Endothelial cell of umbilical vein (primary cell): ENCODE measurements at regions of chr14 and their contacts with region 1.

Region 1: GRCh38 chr14:88013750-88014349 is 8.9 kb downstream of the GPR65 start:
- DNase-seq: peak; percentile 51
- H3K4me3 ChIP-seq: no peak overlapping the region
- H3K27ac ChIP-seq: no peak overlapping the region
- H3K4me1 ChIP-seq: peaks cover 3% of the 10 kb centered on the region
- H3K27me3 ChIP-seq: peaks cover 0 to 1% of the 10 kb centered on the region in 2 experiments
- CTCF ChIP-seq: peak; percentile 76 to 88
- POLR2A ChIP-seq: no peak

Region 2: DNA sequence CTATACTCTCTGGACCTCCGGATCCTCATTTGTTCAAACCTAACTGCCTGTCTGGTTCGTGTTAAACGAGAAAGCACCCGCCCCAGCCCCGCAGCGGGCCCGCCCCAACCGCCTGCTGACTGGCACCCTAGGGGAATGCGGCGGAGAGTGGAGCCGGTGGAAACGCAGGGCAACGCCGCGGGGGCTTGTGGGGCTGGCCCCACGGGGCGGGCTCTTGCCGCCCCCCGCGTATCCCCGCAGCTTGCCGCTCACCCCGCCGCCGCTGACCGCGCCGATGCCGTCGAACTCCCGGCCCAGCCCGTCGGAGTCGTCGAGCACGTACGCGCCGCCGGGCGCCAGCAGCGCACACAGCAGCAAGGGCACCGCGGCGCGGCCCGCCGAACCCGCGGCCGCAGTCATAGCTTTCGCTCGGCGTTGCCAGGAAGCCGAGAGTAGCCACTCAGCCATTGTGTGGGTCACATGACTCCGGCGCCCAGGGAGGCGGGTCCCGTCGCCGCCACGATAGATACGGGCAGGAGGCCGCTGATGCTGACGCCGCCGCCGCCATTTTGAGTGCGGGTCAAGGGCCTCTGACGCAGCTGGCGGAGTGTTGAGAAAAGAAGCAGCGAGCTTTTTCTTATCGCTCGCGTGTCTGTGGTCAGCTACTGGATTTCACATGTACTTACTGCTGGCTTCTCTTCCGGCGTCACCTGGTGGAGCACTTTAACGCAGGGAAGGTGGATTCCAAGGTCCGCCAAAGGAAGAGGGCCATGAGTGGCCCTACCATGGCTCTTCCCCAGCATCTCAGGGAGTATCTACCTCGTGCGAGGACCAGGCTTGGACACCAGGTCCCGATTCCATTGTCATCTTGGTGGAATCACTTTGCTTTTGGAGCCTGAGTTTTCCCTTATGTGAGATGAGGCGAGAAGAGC is 20.9 kb before region 1 on chr14 and contains the start of gene GALC:
- CTCF ChIA-PET with region 1: interaction called, 10 read pairs
- POLR2A ChIA-PET with region 1: no interaction called
- dilution Hi-C with region 1: no loop called
- intact Hi-C with region 1: no loop called
- DNase-seq: peak; percentile 94
- H3K4me3 ChIP-seq: peak within 1 kb of the TSS; percentile 73 to 82 (median 74)
- H3K27ac ChIP-seq: peak within 1 kb of the TSS; percentile 58
- H3K4me1 ChIP-seq: peaks cover 12% of the 10 kb centered on the region
- H3K27me3 ChIP-seq: no peaks in the 10 kb centered on the region
- CTCF ChIP-seq: no peak
- POLR2A ChIP-seq: peak; percentile 76
- total RNA-seq, gene GALC: 14.2 and 15.0 TPM in 2 replicates

Region 3: GRCh38 chr14:88168498-88169165 is 154.8 kb after region 1 on chr14:
- CTCF ChIA-PET with region 1: interaction called, 32 read pairs
- POLR2A ChIA-PET with region 1: no interaction called
- dilution Hi-C with region 1: no loop called
- intact Hi-C with region 1: loop called (anchors 1 kb)
- DNase-seq: peak; percentile 30
- H3K4me3 ChIP-seq: no peak overlapping the region
- H3K27ac ChIP-seq: no peak overlapping the region
- H3K4me1 ChIP-seq: no peaks in the 10 kb centered on the region
- H3K27me3 ChIP-seq: no peaks in the 10 kb centered on the region
- CTCF ChIP-seq: peak; percentile 70 to 81
- POLR2A ChIP-seq: no peak

Region 4: DNA sequence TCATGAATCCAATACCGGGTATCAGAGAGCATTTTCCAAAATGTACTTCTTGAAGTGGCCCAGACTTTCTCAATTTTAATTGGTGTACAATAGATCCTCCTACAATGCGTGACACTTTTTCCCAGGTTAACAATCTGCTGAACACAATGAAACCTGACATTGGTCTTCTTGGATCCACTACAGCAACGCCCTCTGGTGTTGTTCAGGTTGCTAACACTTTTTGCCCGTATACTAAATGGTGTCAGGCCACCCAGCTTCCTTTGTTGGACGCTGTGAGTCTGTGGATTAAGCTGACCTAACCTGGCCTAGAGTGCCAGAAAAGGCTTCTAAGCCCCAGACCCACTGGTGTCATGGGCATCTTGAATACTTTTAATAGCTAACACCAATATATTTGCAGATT is 220.1 kb after region 1 on chr14:
- CTCF ChIA-PET with region 1: no interaction called
- POLR2A ChIA-PET with region 1: no interaction called
- dilution Hi-C with region 1: no loop called
- intact Hi-C with region 1: loop called (anchors 2 kb)
- DNase-seq: peak; percentile 9
- H3K4me3 ChIP-seq: no peak overlapping the region
- H3K27ac ChIP-seq: no peak overlapping the region
- H3K4me1 ChIP-seq: no peaks in the 10 kb centered on the region
- H3K27me3 ChIP-seq: no peaks in the 10 kb centered on the region
- CTCF ChIP-seq: peak in 1 of 2 donors; percentile 18
- POLR2A ChIP-seq: no peak

Region 5: DNA sequence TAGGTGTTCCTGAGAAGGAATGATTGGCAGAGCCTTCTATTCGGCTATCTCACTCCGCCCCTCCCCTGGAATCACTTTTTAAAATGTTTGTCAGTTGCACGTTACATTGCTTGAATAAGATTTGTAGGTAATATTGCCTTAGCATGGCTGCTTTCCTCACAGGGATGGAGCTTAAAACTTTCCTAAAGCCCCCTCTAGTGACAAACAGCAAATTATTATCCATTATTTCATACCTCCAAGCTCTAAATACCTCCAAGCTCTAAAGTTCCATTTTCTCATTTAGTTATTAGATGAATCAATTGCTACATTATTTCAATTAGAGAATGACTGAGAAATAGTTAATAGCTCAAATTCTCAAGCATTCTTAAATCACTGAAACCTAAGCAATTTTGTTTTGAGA is 366.6 kb after region 1 on chr14:
- CTCF ChIA-PET with region 1: interaction called, 25 read pairs
- POLR2A ChIA-PET with region 1: no interaction called
- dilution Hi-C with region 1: no loop called
- intact Hi-C with region 1: loop called (anchors 1 kb)
- DNase-seq: no peak
- H3K4me3 ChIP-seq: no peak overlapping the region
- H3K27ac ChIP-seq: no peak overlapping the region
- H3K4me1 ChIP-seq: peaks cover 3% of the 10 kb centered on the region
- H3K27me3 ChIP-seq: peaks cover 11 to 22% of the 10 kb centered on the region in 2 experiments
- CTCF ChIP-seq: peak in 1 of 2 donors; percentile 1
- POLR2A ChIP-seq: no peak

Region 6: DNA sequence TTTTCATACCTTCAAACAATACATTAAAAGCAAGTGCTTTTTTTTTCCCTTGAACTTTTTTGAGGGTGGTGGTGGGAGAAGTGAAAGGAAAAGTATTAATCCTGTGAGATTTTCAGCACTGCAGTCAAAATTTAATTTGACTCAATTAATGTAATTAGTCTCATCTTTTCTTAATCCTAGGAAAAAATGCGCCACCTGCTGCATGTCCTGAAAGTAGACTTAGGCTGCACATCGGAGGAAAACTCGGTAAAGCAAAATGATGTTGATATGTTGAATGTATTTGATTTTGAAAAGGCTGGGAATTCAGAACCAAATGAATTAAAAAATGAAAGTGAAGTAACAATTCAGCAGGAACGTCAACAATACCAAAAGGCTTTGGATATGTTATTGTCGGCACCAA is 423.8 kb after region 1 on chr14:
- CTCF ChIA-PET with region 1: interaction called, 3 read pairs
- POLR2A ChIA-PET with region 1: no interaction called
- dilution Hi-C with region 1: no loop called
- intact Hi-C with region 1: loop called (anchors 5 kb)
- DNase-seq: no peak
- H3K4me3 ChIP-seq: no peak overlapping the region
- H3K27ac ChIP-seq: no peak overlapping the region
- H3K4me1 ChIP-seq: no peaks in the 10 kb centered on the region
- H3K27me3 ChIP-seq: no peaks in the 10 kb centered on the region
- CTCF ChIP-seq: peak; percentile 1 to 9
- POLR2A ChIP-seq: no peak